Lower leg skin (tissue), 4 donors: ENCODE measurements at regions of chr12 and their contacts with region 1.

Region 1: GRCh38 chr12:59149997-59150642 is 229.8 kb upstream of the LRIG3 start:
- DNase-seq: peak in 1 of 2 donors; percentile 23
- H3K4me3 ChIP-seq: no peak overlapping the region
- CTCF ChIP-seq: peak in 1 of 3 donors; percentile 89
- POLR2A ChIP-seq: no peak

Region 2: DNA sequence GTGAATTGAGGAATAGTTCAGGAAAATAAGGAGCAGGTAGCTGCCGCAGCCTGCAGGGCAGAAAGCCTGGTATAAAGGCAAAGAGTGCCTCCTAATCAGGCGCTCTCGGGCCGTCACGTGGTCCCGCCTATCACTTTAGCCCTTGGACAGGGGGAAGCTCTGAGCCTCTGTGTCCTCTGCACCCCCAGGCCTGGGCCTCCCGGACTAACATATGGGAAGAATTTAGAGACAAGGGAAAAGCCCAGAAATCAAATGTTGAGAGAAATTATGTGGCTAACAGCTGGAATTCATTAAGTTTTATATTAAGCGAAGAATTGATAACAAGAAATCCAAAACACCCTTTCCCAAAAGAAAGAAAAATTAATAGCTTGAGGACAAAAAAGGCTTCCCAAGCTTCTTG is 791.0 kb before region 1 on chr12:
- intact Hi-C with region 1: loop called (anchors 10 kb)
- DNase-seq: peak in 1 of 2 donors; percentile 87
- H3K4me3 ChIP-seq: no peak overlapping the region
- CTCF ChIP-seq: no peak
- POLR2A ChIP-seq: no peak

Region 3: DNA sequence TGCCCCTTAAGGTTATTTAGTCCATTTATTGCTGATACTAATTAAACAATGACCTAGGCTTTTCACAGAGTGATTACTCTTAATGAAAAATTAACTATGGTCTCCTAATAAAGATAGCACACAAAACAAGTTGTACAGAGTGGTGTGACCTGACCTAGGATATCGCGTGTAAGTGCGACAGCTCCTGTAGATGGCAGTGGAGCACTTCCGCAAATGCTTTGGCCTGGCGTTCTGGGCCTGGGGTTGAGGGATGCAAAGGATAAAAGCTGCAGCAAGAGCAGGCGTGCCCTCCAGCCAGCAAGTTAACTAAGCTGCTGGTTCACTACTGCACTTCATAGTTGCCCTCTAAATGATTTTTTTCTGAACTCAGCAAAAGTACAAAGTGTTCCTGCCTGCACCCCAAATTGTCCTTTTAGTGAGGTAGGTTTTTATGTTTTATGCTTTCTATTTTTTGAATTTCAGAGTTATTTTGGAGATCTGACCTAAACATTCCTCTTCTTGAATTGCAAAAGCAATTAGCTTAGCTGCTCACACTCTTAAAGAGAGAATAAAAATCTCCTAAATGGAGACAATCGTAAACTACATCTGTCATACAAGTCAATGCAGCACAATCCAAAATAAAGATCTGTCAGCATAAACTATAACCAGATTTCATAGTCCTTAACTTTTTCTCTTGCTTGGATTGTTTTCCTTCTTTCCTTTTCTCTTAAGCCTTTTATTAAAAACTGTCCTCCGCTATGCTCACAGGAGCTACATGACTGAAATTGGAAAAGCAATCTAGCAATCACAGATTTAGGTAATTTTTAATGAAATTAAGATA is 609.4 kb before region 1 on chr12:
- intact Hi-C with region 1: loop called (anchors 5 kb)
- DNase-seq: peak; percentile 65 to 94
- H3K4me3 ChIP-seq: no peak overlapping the region
- CTCF ChIP-seq: no peak
- POLR2A ChIP-seq: no peak

Region 4: GRCh38 chr12:58557171-58557570 is 592.9 kb before region 1 on chr12:
- intact Hi-C with region 1: no loop called
- DNase-seq: no peak
- H3K4me3 ChIP-seq: no peak overlapping the region
- CTCF ChIP-seq: no peak
- POLR2A ChIP-seq: no peak